GM10248 (cell line): ENCODE measurements at regions of chr20 and their contacts with region 1.

Region 1: GRCh38 chr20:5529331-5530148 is 212.8 kb upstream of the PROKR2 start:
- DNase-seq: peak; percentile 76
- CTCF ChIP-seq: peak; percentile 92

Region 2: GRCh38 chr20:5539691-5540090 is 10.2 kb after region 1 on chr20:
- CTCF ChIA-PET with region 1: interaction called, 23 read pairs
- POLR2A ChIA-PET with region 1: no interaction called
- DNase-seq: no peak
- CTCF ChIP-seq: no peak

Region 3: DNA sequence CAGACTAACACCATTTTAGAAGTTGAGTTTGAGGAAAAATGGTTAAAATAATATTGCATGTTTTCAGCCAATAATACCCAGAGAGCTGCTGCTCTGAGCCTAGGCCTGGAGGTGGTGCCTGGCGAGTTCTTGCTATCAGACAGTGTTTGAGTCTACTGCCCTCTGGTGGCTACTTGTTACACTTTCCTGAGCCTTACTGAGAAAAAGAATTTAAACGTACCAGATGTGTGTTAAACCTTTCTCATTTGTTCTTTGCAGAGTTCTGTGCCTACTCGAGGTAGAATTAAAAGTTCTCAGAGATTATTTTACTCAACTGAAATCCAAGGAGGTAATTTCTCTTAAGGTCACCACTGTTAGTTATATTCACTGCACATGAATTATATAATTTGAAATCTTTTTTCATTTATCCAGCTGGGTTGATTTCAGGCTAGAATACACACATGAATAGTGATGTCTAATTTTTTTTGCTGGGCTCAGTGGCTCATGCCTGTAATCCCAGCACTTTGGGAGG is 258.9 kb after region 1 on chr20:
- CTCF ChIA-PET with region 1: interaction called, 164 read pairs
- POLR2A ChIA-PET with region 1: no interaction called
- DNase-seq: peak; percentile 81
- CTCF ChIP-seq: peak; percentile 63

Region 4: DNA sequence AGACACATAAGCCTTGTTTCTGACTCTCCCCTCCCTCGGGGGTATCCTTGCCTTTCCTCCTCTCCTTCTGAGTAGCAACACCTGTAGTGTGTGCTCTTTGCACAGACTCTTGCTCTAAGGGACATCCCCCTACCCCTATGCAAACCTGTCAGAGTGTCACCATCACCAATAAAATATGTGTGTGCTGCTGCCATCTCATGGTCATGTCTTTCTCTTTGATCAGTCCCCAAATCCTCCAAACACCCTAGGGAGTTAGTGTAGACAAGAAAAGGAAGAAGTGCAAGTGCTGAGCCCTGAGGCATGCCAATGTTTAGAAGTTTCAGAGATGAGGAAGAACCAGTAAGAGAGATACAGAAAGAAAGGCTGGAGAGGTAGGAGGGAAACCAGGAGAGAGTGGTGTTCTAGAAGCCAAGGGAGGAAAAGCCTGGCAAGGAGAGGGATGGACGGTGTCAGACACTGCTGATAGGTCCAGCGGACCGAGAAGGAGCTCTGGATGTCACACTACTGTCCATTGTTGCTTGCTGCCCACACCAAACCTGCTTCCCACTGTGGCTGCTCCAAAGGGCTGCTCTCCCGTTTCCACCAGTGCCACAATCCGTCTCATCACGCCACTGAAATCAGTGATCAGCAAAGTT is 404.4 kb after region 1 on chr20:
- CTCF ChIA-PET with region 1: interaction called, 44 read pairs
- POLR2A ChIA-PET with region 1: no interaction called
- DNase-seq: peak; percentile 63
- CTCF ChIP-seq: peak; percentile 47

Region 5: DNA sequence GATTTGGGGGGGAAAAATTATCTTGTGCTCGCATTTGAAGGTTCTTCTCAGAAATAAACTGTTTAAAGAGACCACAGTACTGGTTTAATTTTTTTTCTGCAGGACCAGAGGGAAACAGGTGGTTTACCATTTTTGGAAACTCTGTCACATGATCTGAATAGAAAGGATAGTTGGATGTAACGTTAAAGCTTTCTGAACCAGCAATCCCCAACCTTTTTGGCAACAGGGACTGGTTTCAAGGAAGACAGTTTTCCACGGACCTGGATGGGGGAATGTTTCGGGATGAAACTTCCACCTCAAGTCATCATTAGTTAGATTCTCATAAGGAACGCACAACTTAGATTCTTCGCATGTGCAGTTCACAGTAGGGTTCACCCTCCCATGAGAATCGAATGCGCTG is 471.3 kb after region 1 on chr20:
- CTCF ChIA-PET with region 1: interaction called, 41 read pairs
- POLR2A ChIA-PET with region 1: no interaction called
- DNase-seq: no peak
- CTCF ChIP-seq: no peak

Region 6: GRCh38 chr20:6074145-6074561 is 544.6 kb after region 1 on chr20:
- CTCF ChIA-PET with region 1: interaction called, 99 read pairs
- POLR2A ChIA-PET with region 1: no interaction called
- DNase-seq: no peak
- CTCF ChIP-seq: peak; percentile 15